SK-N-SH (cell line): ENCODE measurements at regions of chr10 and their contacts with region 1.

Region 1: DNA sequence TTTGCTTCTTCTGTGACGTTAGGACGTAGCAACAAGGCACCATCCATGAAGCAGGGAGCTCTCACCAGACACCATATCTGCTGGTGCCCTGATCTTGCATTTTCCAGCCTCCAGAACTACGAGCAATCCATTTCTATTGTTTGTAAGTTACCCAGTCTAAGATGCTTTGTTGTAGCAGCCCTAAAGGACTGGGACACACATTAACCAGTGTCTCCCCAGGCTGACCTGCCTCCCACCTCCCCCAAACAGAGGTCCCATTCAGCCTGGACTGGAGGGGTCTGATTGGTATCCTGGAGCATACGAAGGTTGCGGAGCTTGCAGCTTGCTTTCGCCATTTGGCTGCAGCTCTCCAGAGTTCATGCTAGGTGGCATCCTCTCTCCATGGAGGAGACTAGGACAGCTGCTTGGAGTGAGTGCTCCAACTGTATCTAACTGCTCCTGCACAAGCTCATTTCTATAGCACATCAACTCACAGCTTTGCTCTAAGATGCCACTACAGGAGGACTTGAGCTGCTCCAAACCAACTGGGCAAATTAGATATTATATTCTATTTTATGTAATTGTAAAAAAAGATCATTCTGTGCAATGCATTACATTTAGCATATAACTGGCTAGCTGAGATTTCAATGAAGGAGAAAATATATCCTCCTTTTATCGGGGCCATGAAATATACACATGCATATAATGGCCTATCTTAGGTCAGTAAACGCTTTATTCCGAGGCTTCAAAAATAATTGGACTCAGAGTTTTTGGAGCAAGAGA is 8.0 kb upstream of the GRK5 start:
- DNase-seq: peak; percentile 78
- H3K4me3 ChIP-seq: no peak overlapping the region
- H3K27ac ChIP-seq: no peak overlapping the region
- H3K4me1 ChIP-seq: peaks cover 0 to 9% of the 10 kb centered on the region in 2 experiments; a peak in 2 of 4 replicates
- H3K27me3 ChIP-seq: no peaks in the 10 kb centered on the region
- CTCF ChIP-seq: peak; percentile 74
- EP300 ChIP-seq: no peak
- RAD21 ChIP-seq: peak; percentile 98

Region 2: GRCh38 chr10:119139464-119140067 is 59.8 kb before region 1 on chr10:
- CTCF ChIA-PET with region 1: interaction called, 16 read pairs
- POLR2A ChIA-PET with region 1: no interaction called
- DNase-seq: peak; percentile 62
- H3K4me3 ChIP-seq: no peak overlapping the region
- H3K27ac ChIP-seq: no peak overlapping the region
- H3K4me1 ChIP-seq: no peaks in the 10 kb centered on the region
- H3K27me3 ChIP-seq: no peaks in the 10 kb centered on the region
- CTCF ChIP-seq: peak; percentile 52
- EP300 ChIP-seq: no peak
- RAD21 ChIP-seq: peak; percentile 72

Region 3: GRCh38 chr10:119416855-119417254 is 217.4 kb after region 1 on chr10:
- CTCF ChIA-PET with region 1: interaction called, 51 read pairs
- POLR2A ChIA-PET with region 1: no interaction called
- DNase-seq: peak; percentile 80
- H3K4me3 ChIP-seq: no peak overlapping the region
- H3K27ac ChIP-seq: no peak overlapping the region
- H3K4me1 ChIP-seq: peaks cover 7 to 66% of the 10 kb centered on the region in 2 experiments; a peak in 2 of 4 replicates
- H3K27me3 ChIP-seq: no peaks in the 10 kb centered on the region
- CTCF ChIP-seq: peak; percentile 81
- EP300 ChIP-seq: no peak
- RAD21 ChIP-seq: peak; percentile 87

Region 4: GRCh38 chr10:119461380-119461779 is 262.0 kb after region 1 on chr10:
- CTCF ChIA-PET with region 1: interaction called, 12 read pairs
- POLR2A ChIA-PET with region 1: no interaction called
- DNase-seq: no peak
- H3K4me3 ChIP-seq: no peak overlapping the region
- H3K27ac ChIP-seq: no peak overlapping the region
- H3K4me1 ChIP-seq: no peaks in the 10 kb centered on the region
- H3K27me3 ChIP-seq: no peaks in the 10 kb centered on the region; the same call in 1 of the 2 replicates
- CTCF ChIP-seq: no peak
- EP300 ChIP-seq: no peak
- RAD21 ChIP-seq: no peak

Region 5: GRCh38 chr10:119542988-119543813 is 343.8 kb after region 1 on chr10:
- CTCF ChIA-PET with region 1: interaction called, 19 read pairs
- POLR2A ChIA-PET with region 1: no interaction called
- DNase-seq: peak; percentile 82
- H3K4me3 ChIP-seq: peak overlapping the region; percentile 63 to 71
- H3K27ac ChIP-seq: no peak overlapping the region
- H3K4me1 ChIP-seq: peaks cover 3 to 17% of the 10 kb centered on the region in 2 experiments; a peak in 3 of 4 replicates
- H3K27me3 ChIP-seq: no peaks in the 10 kb centered on the region; the same call in 1 of the 2 replicates
- CTCF ChIP-seq: peak; percentile 75
- EP300 ChIP-seq: no peak
- RAD21 ChIP-seq: peak; percentile 52

Region 6: DNA sequence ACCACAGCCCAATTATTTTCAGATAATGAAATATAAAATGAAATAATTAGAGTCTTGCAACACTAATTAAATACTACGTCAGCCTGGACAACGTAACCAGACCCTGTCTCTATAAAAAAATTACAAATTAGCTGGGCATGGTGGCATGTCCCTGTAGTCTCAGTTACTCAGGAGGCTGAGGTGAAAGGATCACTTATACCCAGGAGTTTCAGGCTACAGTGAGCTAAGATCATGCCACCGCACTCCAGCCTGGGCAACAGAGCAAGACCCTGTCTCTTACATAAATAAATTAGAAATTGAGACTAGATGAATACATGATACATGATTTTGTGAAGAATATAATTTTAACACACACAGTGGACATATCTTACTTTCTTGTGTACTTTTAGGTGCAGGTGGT is 378.9 kb after region 1 on chr10:
- CTCF ChIA-PET with region 1: no interaction called
- POLR2A ChIA-PET with region 1: no interaction called
- DNase-seq: no peak
- H3K4me3 ChIP-seq: no peak overlapping the region
- H3K27ac ChIP-seq: no peak overlapping the region
- H3K4me1 ChIP-seq: peaks cover 3 to 8% of the 10 kb centered on the region in 2 experiments; a peak in 2 of 4 replicates
- H3K27me3 ChIP-seq: no peaks in the 10 kb centered on the region
- CTCF ChIP-seq: no peak
- EP300 ChIP-seq: no peak
- RAD21 ChIP-seq: no peak